CD8-positive, alpha-beta memory T cell (primary cell): ENCODE measurements at regions of chr2 and their contacts with region 1.

Region 1: GRCh38 chr2:120174963-120175581 is 48.1 kb downstream of the TMEM185B start:
- DNase-seq: peak in 2 of 5 donors; percentile 44 to 49
- H3K4me3 ChIP-seq: no peak overlapping the region
- H3K4me3 Mint-ChIP-seq: no peak overlapping the region
- H3K27ac ChIP-seq: no peak overlapping the region
- H3K27ac Mint-ChIP-seq: peak overlapping the region in 6 of 8 donors; percentile 20 to 78 (median 62)
- H3K4me1 ChIP-seq: peaks cover 50% of the 10 kb centered on the region
- H3K4me1 Mint-ChIP-seq: peaks cover 39 to 49% (median 47%) of the 10 kb centered on the region in 3 donors
- H3K27me3 ChIP-seq: no peaks in the 10 kb centered on the region
- H3K27me3 Mint-ChIP-seq: no peaks in the 10 kb centered on the region

Region 2: GRCh38 chr2:119641562-119642258 is 533.4 kb before region 1 on chr2:
- CTCF ChIA-PET with region 1: interaction called, 10 read pairs
- POLR2A ChIA-PET with region 1: no interaction called
- DNase-seq: peak; percentile 41 to 75 (median 57)
- H3K4me3 ChIP-seq: no peak overlapping the region
- H3K4me3 Mint-ChIP-seq: no peak overlapping the region
- H3K27ac ChIP-seq: no peak overlapping the region
- H3K27ac Mint-ChIP-seq: no peak overlapping the region
- H3K4me1 ChIP-seq: no peaks in the 10 kb centered on the region
- H3K4me1 Mint-ChIP-seq: peaks cover 1 to 6% (median 5%) of the 10 kb centered on the region in 3 donors
- H3K27me3 ChIP-seq: no peaks in the 10 kb centered on the region
- H3K27me3 Mint-ChIP-seq: peaks cover 6 to 7% of the 10 kb centered on the region in 2 donors

Region 3: GRCh38 chr2:119702918-119703401 is 472.1 kb before region 1 on chr2:
- CTCF ChIA-PET with region 1: interaction called, 37 read pairs
- POLR2A ChIA-PET with region 1: interaction called, 3 read pairs
- DNase-seq: peak; percentile 56 to 75 (median 61)
- H3K4me3 ChIP-seq: no peak overlapping the region
- H3K4me3 Mint-ChIP-seq: peak overlapping the region in 1 of 7 donors; percentile 40
- H3K27ac ChIP-seq: no peak overlapping the region
- H3K27ac Mint-ChIP-seq: peak overlapping the region in 3 of 8 donors; percentile 43 to 96 (median 47)
- H3K4me1 ChIP-seq: peaks cover 12% of the 10 kb centered on the region
- H3K4me1 Mint-ChIP-seq: peaks cover 6 to 21% (median 14%) of the 10 kb centered on the region in 3 donors
- H3K27me3 ChIP-seq: no peaks in the 10 kb centered on the region
- H3K27me3 Mint-ChIP-seq: peaks cover 6 to 31% of the 10 kb centered on the region in 2 donors

Region 4: DNA sequence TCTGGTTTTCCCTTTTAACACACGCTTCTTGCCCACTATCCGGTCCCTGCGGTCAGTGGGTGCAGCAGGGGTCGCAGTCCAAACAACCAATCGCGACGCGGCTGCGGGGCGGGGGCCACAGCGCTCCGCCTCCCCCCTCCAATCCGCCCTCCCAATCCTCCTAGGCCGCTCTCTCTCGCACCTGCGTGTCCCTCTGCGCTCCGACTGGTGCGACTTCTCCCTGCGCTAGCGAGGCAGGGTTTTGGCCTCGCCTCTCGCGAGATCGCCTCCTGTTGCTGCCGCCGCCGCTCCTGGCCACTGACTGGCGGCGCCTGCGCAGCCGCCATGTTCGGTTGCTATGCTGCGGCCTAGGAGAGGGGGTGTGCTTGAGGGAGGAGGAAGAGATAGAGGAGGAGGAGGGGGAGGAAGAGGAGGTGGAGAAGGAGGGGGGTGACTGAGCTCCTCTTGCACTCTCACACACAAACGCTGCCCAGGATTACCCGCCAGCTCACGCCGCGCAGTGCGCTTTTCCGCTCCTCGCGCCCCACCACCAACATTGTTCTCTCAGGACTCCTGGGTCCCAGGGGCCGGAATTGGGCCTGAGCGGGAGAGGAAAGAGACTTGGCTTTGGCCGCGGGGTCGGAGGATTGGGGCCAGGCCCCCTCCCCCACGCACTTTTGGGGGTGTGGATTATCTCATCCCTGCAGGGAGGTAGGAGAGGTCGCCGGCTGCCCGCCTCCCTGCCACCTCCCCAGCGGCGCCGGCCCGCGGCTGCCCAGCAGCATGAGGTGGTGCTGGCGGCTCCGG is 415.4 kb before region 1 on chr2 and contains the start of gene PTPN4:
- CTCF ChIA-PET with region 1: interaction called, 69 read pairs
- POLR2A ChIA-PET with region 1: interaction called, 15 read pairs
- DNase-seq: peak; percentile 94 to 99 (median 96)
- H3K4me3 ChIP-seq: peak within 1 kb of the TSS; percentile 86
- H3K4me3 Mint-ChIP-seq: peak within 1 kb of the TSS; percentile 91 to 99 (median 96)
- H3K27ac ChIP-seq: peak within 1 kb of the TSS; percentile 88
- H3K27ac Mint-ChIP-seq: peak within 1 kb of the TSS; percentile 79 to 96 (median 88)
- H3K4me1 ChIP-seq: peaks cover 43% of the 10 kb centered on the region
- H3K4me1 Mint-ChIP-seq: peaks cover 40 to 62% (median 52%) of the 10 kb centered on the region in 3 donors
- H3K27me3 ChIP-seq: no peaks in the 10 kb centered on the region
- H3K27me3 Mint-ChIP-seq: peaks cover 0 to under 1% of the 10 kb centered on the region in 2 donors
- total RNA-seq, gene PTPN4: 29.0 to 34.2 TPM

Region 5: DNA sequence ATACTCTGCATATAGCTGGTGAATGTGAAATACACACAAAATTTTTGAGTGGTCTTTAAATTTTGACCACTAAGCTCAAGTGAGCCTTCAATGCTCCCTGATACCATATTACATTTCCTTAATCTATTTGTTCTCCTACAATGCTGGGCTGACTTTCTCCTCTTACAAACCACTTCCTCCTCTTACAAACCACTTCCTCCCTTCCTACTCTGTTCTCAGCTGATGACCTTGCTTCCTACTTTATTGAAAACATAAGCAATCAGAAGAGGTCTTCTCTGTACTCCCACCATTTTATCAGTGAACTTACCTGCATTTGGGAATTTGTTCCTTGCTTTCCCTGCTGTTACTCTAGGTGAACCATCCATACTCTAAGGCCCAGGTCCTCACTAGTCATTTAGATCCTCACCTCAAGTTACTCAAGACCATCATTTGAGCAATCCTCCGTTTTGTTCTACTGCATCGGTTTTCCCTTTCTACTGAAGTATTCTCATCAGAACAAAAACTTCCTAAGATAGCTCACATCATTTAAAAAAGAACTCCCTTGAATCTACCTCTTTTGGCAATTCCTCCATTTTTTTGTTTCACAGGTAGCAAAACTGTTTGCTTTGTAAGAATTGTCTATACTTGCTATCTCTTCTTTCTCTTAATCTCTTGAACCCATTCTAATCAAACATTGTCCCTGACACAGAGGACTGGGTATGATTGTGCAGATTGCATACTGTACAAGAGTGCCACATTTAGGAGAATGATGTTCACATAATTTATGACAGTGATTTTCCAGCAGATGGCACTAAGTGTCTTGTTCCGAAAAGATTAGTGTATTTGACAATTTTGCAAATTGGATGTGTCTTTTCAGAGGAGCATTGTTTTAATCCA is 65.6 kb before region 1 on chr2:
- CTCF ChIA-PET with region 1: interaction called, 46 read pairs
- POLR2A ChIA-PET with region 1: interaction called, 6 read pairs
- DNase-seq: peak in 2 of 5 donors; percentile 38 to 55
- H3K4me3 ChIP-seq: peak overlapping the region; percentile 38
- H3K4me3 Mint-ChIP-seq: peak overlapping the region; percentile 32 to 89 (median 67)
- H3K27ac ChIP-seq: no peak overlapping the region
- H3K27ac Mint-ChIP-seq: peak overlapping the region in 7 of 8 donors; percentile 52 to 78 (median 71)
- H3K4me1 ChIP-seq: peaks cover 20% of the 10 kb centered on the region
- H3K4me1 Mint-ChIP-seq: peaks cover 22 to 26% (median 23%) of the 10 kb centered on the region in 3 donors
- H3K27me3 ChIP-seq: no peaks in the 10 kb centered on the region
- H3K27me3 Mint-ChIP-seq: peaks cover 0 to 2% of the 10 kb centered on the region in 2 donors

Region 6: GRCh38 chr2:120312861-120313694 is 138.0 kb after region 1 on chr2:
- CTCF ChIA-PET with region 1: interaction called, 39 read pairs
- POLR2A ChIA-PET with region 1: interaction called, 3 read pairs
- DNase-seq: peak; percentile 39 to 74 (median 46)
- H3K4me3 ChIP-seq: peak overlapping the region; percentile 54
- H3K4me3 Mint-ChIP-seq: peak overlapping the region; percentile 38 to 92 (median 81)
- H3K27ac ChIP-seq: no peak overlapping the region
- H3K27ac Mint-ChIP-seq: peak overlapping the region in 4 of 8 donors; percentile 51 to 83 (median 68)
- H3K4me1 ChIP-seq: peaks cover 9% of the 10 kb centered on the region
- H3K4me1 Mint-ChIP-seq: peaks cover 15 to 24% (median 16%) of the 10 kb centered on the region in 3 donors
- H3K27me3 ChIP-seq: no peaks in the 10 kb centered on the region
- H3K27me3 Mint-ChIP-seq: peaks cover 8 to 11% of the 10 kb centered on the region in 2 donors